Breast epithelium (tissue), 4 donors: ENCODE measurements at regions of chr11 and their contacts with region 1.

Region 1: GRCh38 chr11:17014838-17015626 is 818 bp upstream of the PLEKHA7 start:
- DNase-seq: no peak
- H3K4me3 ChIP-seq: peak overlapping the region; percentile 58 to 83 (median 79)
- H3K27ac ChIP-seq: peak overlapping the region; percentile 81 to 87
- H3K4me1 ChIP-seq: no peaks in the 10 kb centered on the region
- H3K27me3 ChIP-seq: no peaks in the 10 kb centered on the region
- CTCF ChIP-seq: peak in 2 of 3 donors; percentile 23 to 44
- POLR2A ChIP-seq: no peak

Region 2: DNA sequence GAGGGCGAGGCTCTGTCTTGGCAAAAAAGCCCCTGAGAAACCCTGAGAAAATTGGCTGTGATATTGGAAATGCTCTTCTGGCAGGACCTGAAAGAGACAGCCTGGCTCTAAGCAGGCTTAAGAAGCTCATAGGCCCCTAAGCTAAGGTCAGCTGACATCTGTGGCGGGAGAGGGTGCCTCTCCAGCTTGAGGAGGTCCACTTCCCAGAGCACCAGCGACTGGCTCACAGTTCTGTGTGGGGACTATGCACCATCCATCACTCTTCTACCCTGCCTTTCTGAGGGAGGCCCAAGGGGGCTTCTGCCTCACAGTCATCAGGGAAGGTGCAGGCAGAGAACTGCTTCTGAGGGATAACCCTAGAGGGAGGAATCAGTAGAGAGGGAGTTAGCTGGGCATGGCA is 13.2 kb before region 1 on chr11:
- intact Hi-C with region 1: no loop called
- DNase-seq: no peak
- H3K4me3 ChIP-seq: no peak overlapping the region
- H3K27ac ChIP-seq: peak overlapping the region; percentile 71 to 75
- H3K4me1 ChIP-seq: peaks cover 0 to 8% of the 10 kb centered on the region in 2 donors
- H3K27me3 ChIP-seq: no peaks in the 10 kb centered on the region
- CTCF ChIP-seq: no peak
- POLR2A ChIP-seq: no peak

Region 3: DNA sequence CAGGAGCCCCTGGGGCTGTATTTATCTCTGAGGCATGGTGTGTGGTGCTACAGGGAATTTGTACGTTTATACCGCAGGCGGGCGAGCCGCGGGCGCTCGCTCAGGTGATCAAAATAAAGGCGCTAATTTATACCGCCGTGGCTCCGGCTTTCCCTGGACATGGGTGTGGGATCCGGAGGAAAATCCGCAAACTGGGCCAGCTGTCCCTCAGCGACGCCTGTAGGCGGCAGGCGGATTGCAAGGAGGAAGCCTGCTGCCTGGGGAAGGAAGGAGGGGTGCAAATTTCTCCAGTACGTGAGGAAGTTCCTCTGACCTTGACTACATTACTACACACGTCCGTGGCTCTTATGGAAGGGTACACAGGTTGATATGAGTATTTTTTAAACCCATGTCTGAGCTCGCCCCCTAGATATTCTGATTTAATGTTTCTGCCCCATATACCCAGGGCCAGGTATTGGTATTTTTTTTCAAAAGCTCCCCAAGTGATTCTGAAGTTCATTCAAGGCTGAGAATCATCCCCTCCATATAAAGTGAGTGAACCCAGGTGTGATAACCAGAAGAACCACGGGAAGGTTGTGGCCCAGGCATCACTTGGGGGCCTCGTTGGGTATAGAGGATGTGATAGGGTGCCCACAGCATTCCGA is 707.1 kb after region 1 on chr11:
- intact Hi-C with region 1: loop called (anchors 5 kb)
- DNase-seq: no peak
- H3K4me3 ChIP-seq: no peak overlapping the region
- H3K27ac ChIP-seq: no peak overlapping the region
- H3K4me1 ChIP-seq: no peaks in the 10 kb centered on the region
- H3K27me3 ChIP-seq: peaks cover 12 to 76% of the 10 kb centered on the region in 2 donors
- CTCF ChIP-seq: no peak
- POLR2A ChIP-seq: no peak